Activated CD4-positive, alpha-beta memory T cell treated with anti-CD3 and anti-CD28 coated beads for 36 hours (primary cell): ENCODE measurements at regions of chr19 and their contacts with region 1.

Region 1: GRCh38 chr19:23395041-23395721 is at the start of gene ZNF91:
- DNase-seq: peak; percentile 95
- H3K4me3 Mint-ChIP-seq: peak within 1 kb of the TSS; percentile 96
- H3K27ac Mint-ChIP-seq: peak within 1 kb of the TSS; percentile 97
- H3K4me1 Mint-ChIP-seq: peaks cover 30% of the 10 kb centered on the region
- H3K27me3 Mint-ChIP-seq: no peaks in the 10 kb centered on the region
- total RNA-seq, gene ZNF91: 34.7 to 39.0 TPM

Region 2: GRCh38 chr19:23249911-23250649 is 145.1 kb before region 1 on chr19 and contains the start of gene ZNF724:
- CTCF ChIA-PET with region 1: no interaction called
- POLR2A ChIA-PET with region 1: interaction called, 15 read pairs
- intact Hi-C with region 1: loop called (anchors 2 kb)
- DNase-seq: peak; percentile 94
- H3K4me3 Mint-ChIP-seq: peak within 1 kb of the TSS; percentile 94
- H3K27ac Mint-ChIP-seq: peak within 1 kb of the TSS; percentile 92
- H3K4me1 Mint-ChIP-seq: peaks cover 9% of the 10 kb centered on the region
- H3K27me3 Mint-ChIP-seq: no peaks in the 10 kb centered on the region
- total RNA-seq, gene ZNF724: 13.6 to 14.5 TPM

Region 3: DNA sequence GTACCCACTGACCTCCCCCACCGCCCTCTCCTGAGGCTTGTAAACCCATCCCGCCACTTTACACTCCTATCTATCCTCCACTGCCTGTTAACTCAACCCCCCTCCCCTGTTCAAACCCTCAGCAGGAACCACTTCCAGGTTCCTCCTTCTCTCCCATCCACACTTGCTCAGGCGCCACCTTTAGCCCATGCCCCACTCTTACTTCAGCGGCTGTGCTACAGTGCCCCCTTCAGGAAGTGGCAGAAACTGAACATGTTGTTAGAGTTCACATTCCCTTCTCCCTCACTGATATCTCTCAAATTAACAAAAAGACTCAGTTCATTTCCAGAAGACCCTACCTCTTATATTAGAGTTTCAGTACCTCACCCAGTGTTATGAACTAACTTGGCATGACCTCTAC is 49.3 kb before region 1 on chr19:
- CTCF ChIA-PET with region 1: no interaction called
- POLR2A ChIA-PET with region 1: no interaction called
- intact Hi-C with region 1: no loop called
- DNase-seq: no peak
- H3K4me3 Mint-ChIP-seq: no peak overlapping the region
- H3K27ac Mint-ChIP-seq: no peak overlapping the region
- H3K4me1 Mint-ChIP-seq: no peaks in the 10 kb centered on the region
- H3K27me3 Mint-ChIP-seq: no peaks in the 10 kb centered on the region

Region 4: GRCh38 chr19:23378948-23379347 is 16.2 kb before region 1 on chr19:
- CTCF ChIA-PET with region 1: no interaction called
- POLR2A ChIA-PET with region 1: no interaction called
- intact Hi-C with region 1: loop called (anchors 2 kb)
- DNase-seq: no peak
- H3K4me3 Mint-ChIP-seq: no peak overlapping the region
- H3K27ac Mint-ChIP-seq: no peak overlapping the region
- H3K4me1 Mint-ChIP-seq: peaks cover 11% of the 10 kb centered on the region
- H3K27me3 Mint-ChIP-seq: no peaks in the 10 kb centered on the region

Region 5: GRCh38 chr19:23420824-23421223 is 25.6 kb after region 1 on chr19:
- CTCF ChIA-PET with region 1: no interaction called
- POLR2A ChIA-PET with region 1: no interaction called
- intact Hi-C with region 1: no loop called
- DNase-seq: no peak
- H3K4me3 Mint-ChIP-seq: no peak overlapping the region
- H3K27ac Mint-ChIP-seq: no peak overlapping the region
- H3K4me1 Mint-ChIP-seq: peaks cover 3% of the 10 kb centered on the region
- H3K27me3 Mint-ChIP-seq: peaks cover 12% of the 10 kb centered on the region

Region 6: GRCh38 chr19:23686621-23687423 is 291.6 kb after region 1 on chr19 and contains the start of gene ZNF675:
- CTCF ChIA-PET with region 1: no interaction called
- POLR2A ChIA-PET with region 1: interaction called, 10 read pairs
- intact Hi-C with region 1: loop called (anchors 1 kb)
- DNase-seq: peak; percentile 93
- H3K4me3 Mint-ChIP-seq: peak within 1 kb of the TSS; percentile 97
- H3K27ac Mint-ChIP-seq: peak within 1 kb of the TSS; percentile 97
- H3K4me1 Mint-ChIP-seq: peaks cover 38% of the 10 kb centered on the region
- H3K27me3 Mint-ChIP-seq: no peaks in the 10 kb centered on the region
- total RNA-seq, gene ZNF675: 17.1 to 21.0 TPM

Region 7: GRCh38 chr19:23914402-23915301 is 519.5 kb after region 1 on chr19 and contains the start of gene ZNF726:
- CTCF ChIA-PET with region 1: no interaction called
- POLR2A ChIA-PET with region 1: interaction called, 6 read pairs
- intact Hi-C with region 1: loop called (anchors 10 kb)
- DNase-seq: peak; percentile 93
- H3K4me3 Mint-ChIP-seq: peak within 1 kb of the TSS; percentile 95
- H3K27ac Mint-ChIP-seq: peak within 1 kb of the TSS; percentile 91
- H3K4me1 Mint-ChIP-seq: peaks cover 18% of the 10 kb centered on the region
- H3K27me3 Mint-ChIP-seq: no peaks in the 10 kb centered on the region
- total RNA-seq, gene ZNF726: 15.9 to 17.3 TPM